ENCODE measurements at regions of chr1 and their contacts with region 1.

Region 1: GRCh38 chr1:207885129-207886032 is 25.5 kb downstream of the CD34 start:
- DNase-seq: peak; percentile 53
- H3K4me3 Mint-ChIP-seq: no peak overlapping the region
- H3K27ac Mint-ChIP-seq: peak overlapping the region; percentile 94
- H3K4me1 Mint-ChIP-seq: peaks cover 39% of the 10 kb centered on the region
- H3K27me3 Mint-ChIP-seq: no peaks in the 10 kb centered on the region

Region 2: DNA sequence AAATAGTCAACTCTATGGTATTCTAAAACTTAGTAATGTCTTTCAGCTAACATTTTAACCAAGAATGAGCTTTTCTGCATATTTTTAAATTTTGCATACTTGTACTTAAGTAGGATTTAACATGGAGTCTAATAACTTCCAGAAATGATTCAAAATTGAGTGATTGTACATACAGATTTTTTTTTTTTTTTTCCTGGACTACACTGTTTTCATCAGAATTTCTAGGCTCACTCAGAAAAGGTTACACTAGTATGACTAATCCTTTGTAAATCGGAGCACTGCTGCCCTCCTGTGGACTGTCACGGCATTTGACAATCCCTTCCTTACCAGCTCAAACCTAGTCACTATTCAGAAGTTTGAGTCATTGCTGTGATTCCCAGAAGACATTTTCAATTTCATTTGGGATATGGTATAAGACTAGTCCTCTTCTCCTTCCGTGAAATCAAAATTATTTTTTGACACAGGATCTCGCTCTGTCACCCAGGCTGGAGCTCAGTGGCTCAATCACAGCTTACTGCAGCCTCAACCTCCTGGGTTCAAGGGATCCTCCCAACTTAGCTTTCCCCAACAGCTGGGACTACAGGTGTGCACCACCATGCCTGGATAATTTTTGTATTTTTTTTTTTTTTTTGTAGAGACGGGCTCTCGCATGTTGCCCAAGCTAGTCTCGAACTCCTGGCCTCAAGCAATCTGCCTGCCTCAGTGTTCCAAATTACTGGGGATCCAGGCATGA is 88.0 kb before region 1 on chr1:
- intact Hi-C with region 1: loop called (anchors 1 kb)
- DNase-seq: peak; percentile 62
- H3K4me3 Mint-ChIP-seq: no peak overlapping the region
- H3K27ac Mint-ChIP-seq: peak overlapping the region; percentile 32
- H3K4me1 Mint-ChIP-seq: peaks cover 36% of the 10 kb centered on the region
- H3K27me3 Mint-ChIP-seq: no peaks in the 10 kb centered on the region

Region 3: GRCh38 chr1:207868774-207869721 is 16.3 kb before region 1 on chr1:
- intact Hi-C with region 1: loop called (anchors 1 kb)
- DNase-seq: peak; percentile 69
- H3K4me3 Mint-ChIP-seq: peak overlapping the region; percentile 92
- H3K27ac Mint-ChIP-seq: peak overlapping the region; percentile 96
- H3K4me1 Mint-ChIP-seq: peaks cover 45% of the 10 kb centered on the region
- H3K27me3 Mint-ChIP-seq: no peaks in the 10 kb centered on the region

Region 4: DNA sequence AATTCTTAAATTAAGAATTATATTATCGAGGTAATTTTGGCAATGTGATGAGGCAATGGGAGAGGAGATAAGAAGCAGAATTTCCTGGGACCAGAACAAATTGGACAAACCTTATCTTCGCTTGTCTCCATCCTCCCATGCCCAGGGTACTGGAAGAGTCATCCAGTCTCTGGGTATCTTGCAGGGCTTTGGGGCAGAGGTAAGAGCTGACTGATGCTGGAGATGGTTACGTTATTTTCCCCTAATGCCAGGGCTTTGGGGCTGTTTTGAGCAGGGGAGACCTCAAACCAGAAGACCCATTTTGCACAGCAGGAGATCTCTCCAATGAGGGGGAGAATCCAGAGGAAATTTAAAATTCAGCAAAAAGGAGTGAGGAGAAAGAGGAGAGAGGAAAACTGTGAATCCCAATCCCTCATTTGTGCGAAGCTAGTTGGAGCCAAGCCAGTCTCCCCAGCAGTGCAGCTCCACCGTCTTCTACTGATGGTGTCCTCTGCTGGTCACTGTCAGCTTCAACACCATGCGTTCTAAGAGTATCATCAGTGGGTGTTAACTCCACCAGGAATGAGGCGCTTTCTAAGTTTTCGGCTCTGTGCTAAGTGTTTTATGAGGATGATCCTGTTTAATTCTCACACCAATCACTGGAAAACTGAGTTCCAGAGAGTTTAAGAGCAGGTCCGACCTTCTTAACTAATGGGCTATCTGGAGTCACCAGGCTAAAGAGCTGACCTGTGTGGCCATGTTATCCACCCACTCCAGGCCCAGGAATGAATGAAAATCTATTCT is 112.3 kb after region 1 on chr1:
- intact Hi-C with region 1: loop called (anchors 1 kb)
- DNase-seq: peak; percentile 8
- H3K4me3 Mint-ChIP-seq: no peak overlapping the region
- H3K27ac Mint-ChIP-seq: no peak overlapping the region
- H3K4me1 Mint-ChIP-seq: no peaks in the 10 kb centered on the region
- H3K27me3 Mint-ChIP-seq: peaks cover 15% of the 10 kb centered on the region

Region 5: GRCh38 chr1:208245185-208245705 is 359.9 kb after region 1 on chr1:
- intact Hi-C with region 1: loop called (anchors 10 kb)
- DNase-seq: peak; percentile 61
- H3K4me3 Mint-ChIP-seq: peak overlapping the region; percentile 65
- H3K27ac Mint-ChIP-seq: no peak overlapping the region
- H3K4me1 Mint-ChIP-seq: peaks cover 12% of the 10 kb centered on the region
- H3K27me3 Mint-ChIP-seq: peaks cover 51% of the 10 kb centered on the region

Measured in activated T-helper 1 cell treated with anti-CD3 and anti-CD28 coated beads, Interleukin-12 subunit alpha, Interleukin-12 subunit beta, Interleukin-2, Interleukin-4 antibody, amounts not matched to agents 30 ng/mL and 10 ng/mL and 1 ng/mL, durations not matched to agents 14 hours and 24 hours and 36 hours (primary cell).